ENCODE measurements at regions of chr18 and their contacts with region 1.

Region 1: DNA sequence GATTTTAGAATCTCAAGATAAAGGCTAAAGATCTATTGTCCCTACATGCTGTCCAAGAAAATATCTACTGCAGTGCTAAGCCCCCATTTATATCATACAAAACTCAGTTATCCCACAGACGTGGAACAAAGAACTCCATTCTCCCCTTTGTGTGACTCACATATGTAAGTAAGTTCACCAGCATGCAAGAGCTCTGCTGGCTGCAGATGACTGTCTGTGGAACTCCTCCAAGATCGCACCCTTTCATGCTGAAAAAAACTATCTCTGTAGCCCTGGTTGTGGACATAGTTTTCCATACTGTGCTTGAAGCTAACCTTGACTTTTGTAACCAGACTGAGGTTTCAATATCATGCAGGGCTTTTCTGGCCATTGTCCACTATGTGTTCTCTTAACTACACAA is 207.1 kb downstream of the ZNF521 start:
- DNase-seq: peak in 3 of 5 donors; percentile 40 to 56 (median 40)
- H3K4me3 ChIP-seq: no peak overlapping the region
- H3K27ac ChIP-seq: peak overlapping the region in 1 of 2 donors; percentile 22
- H3K4me1 ChIP-seq: peaks cover 9% of the 10 kb centered on the region
- H3K27me3 ChIP-seq: no peaks in the 10 kb centered on the region
- CTCF ChIP-seq: no peak
- EP300 ChIP-seq: no peak
- POLR2A ChIP-seq: no peak

Region 2: GRCh38 chr18:26863122-26863879 is 1718.5 kb after region 1 on chr18:
- intact Hi-C with region 1: loop called in 1 of 4 experiments (anchors 10 kb)
- DNase-seq: peak; percentile 43 to 67 (median 56)
- H3K4me3 ChIP-seq: peak overlapping the region; percentile 11
- H3K27ac ChIP-seq: peak overlapping the region in 1 of 2 donors; percentile 20
- H3K4me1 ChIP-seq: peaks cover 8% of the 10 kb centered on the region
- H3K27me3 ChIP-seq: no peaks in the 10 kb centered on the region
- CTCF ChIP-seq: no peak
- EP300 ChIP-seq: no peak
- POLR2A ChIP-seq: no peak